Adrenal gland (tissue), 19 donors: ENCODE measurements at regions of chr14 and their contacts with region 1.

Region 1: DNA sequence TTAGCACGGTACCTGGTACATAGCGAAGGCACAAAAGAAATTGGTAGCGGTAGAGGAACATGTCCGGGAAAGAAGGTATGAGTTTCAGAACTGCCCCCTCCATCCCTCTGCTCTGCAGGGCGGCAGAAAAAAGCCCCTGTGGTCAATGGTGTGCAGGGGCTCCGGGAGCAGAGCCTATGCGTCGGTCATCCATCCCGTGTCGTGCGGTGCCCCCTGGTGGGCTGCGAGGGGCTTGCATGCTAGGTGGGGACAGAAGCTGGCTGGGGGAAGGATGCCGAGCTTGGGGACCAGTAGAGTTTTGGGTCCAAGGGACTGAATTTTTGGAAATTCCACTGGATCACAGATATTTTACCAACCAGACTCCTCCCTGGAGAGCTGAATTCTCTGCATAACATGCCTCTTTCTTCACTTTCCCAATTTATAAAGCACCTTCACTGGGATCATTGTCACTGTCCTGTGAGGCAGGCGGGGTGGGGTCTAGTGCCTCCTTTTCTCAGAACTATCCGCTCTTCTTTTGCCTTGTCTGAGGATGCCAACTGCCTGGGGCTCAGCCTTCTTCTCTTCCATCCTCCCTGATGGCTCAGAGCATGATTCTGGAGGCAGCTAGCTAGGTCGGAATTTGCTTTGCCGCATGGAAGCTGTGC is 148.7 kb downstream of the SMOC1 start:
- DNase-seq: peak; percentile 52 to 87 (median 74)
- H3K4me3 ChIP-seq: no peak overlapping the region
- H3K27ac ChIP-seq: no peak overlapping the region
- H3K4me1 ChIP-seq: no peaks in the 10 kb centered on the region
- H3K27me3 ChIP-seq: no peaks in the 10 kb centered on the region
- CTCF ChIP-seq: peak; percentile 89 to 98 (median 93)
- POLR2A ChIP-seq: no peak

Region 2: DNA sequence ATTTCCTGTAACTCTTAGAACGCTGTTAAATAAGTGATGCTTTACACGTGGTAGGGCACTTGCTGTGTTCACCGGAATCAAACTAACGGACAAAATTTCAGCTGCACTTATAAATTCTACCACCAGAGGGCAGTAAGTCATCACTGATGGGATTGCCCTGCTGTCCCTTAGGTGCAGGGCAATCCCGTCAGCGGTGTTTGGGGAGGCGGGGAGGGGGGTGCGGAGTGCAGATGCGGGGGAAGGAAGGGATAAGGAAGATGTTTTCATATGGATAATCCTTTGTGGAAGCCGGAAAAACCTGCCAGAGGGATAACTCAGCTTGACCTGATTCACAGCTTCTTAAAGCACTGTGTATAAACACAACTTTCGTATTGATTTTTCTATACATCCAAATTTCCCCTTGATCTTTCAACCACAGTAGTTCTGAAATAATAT is 209.1 kb before region 1 on chr14:
- intact Hi-C with region 1: loop called (anchors 2 to 5 kb)
- DNase-seq: peak; percentile 30 to 65 (median 50)
- H3K4me3 ChIP-seq: no peak overlapping the region
- H3K27ac ChIP-seq: no peak overlapping the region
- H3K4me1 ChIP-seq: no peaks in the 10 kb centered on the region
- H3K27me3 ChIP-seq: peaks cover 12% of the 10 kb centered on the region
- CTCF ChIP-seq: peak; percentile 82 to 97 (median 92)
- POLR2A ChIP-seq: peak in 1 of 2 donors; percentile 14